ENCODE measurements at regions of chr2 and their contacts with region 1.

Region 1: GRCh38 chr2:231810905-231811304 is 24.7 kb downstream of the COPS7B start:
- DNase-seq: peak; percentile 89
- ATAC-seq: peak; percentile 94
- H3K4me3 ChIP-seq: no peak overlapping the region
- H3K27ac ChIP-seq: no peak overlapping the region
- H3K4me1 ChIP-seq: peaks cover 3% of the 10 kb centered on the region; the same call in 1 of the 2 replicates
- H3K27me3 ChIP-seq: no peaks in the 10 kb centered on the region
- CTCF ChIP-seq: no peak
- POLR2A ChIP-seq: no peak
- RAD21 ChIP-seq: no peak

Region 2: DNA sequence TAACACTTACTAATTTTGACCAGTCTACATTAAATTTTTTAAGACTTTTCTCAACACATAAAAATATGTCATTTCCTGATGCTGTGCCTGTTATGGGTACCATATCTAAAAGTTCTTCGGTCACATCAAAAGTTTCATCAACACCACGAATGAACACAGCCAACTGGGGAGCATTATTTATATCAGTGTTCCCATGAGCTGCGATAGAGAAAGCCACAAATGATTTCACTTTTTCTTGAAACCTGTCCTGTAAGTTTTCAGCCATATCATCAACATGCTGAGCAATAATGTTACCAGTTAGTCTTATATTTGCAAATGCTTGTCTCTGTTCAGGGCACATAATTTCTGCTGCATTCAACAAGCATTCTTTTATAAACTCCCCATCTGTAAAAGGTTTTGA is 316.2 kb before region 1 on chr2:
- CTCF ChIA-PET with region 1: no interaction called
- POLR2A ChIA-PET with region 1: no interaction called
- dilution Hi-C with region 1: no loop called
- in situ Hi-C with region 1: no loop called
- intact Hi-C with region 1: no loop called
- DNase-seq: no peak
- ATAC-seq: no peak
- H3K4me3 ChIP-seq: no peak overlapping the region
- H3K27ac ChIP-seq: no peak overlapping the region
- H3K4me1 ChIP-seq: no peaks in the 10 kb centered on the region
- H3K27me3 ChIP-seq: no peaks in the 10 kb centered on the region
- CTCF ChIP-seq: no peak
- POLR2A ChIP-seq: no peak
- RAD21 ChIP-seq: no peak

Region 3: DNA sequence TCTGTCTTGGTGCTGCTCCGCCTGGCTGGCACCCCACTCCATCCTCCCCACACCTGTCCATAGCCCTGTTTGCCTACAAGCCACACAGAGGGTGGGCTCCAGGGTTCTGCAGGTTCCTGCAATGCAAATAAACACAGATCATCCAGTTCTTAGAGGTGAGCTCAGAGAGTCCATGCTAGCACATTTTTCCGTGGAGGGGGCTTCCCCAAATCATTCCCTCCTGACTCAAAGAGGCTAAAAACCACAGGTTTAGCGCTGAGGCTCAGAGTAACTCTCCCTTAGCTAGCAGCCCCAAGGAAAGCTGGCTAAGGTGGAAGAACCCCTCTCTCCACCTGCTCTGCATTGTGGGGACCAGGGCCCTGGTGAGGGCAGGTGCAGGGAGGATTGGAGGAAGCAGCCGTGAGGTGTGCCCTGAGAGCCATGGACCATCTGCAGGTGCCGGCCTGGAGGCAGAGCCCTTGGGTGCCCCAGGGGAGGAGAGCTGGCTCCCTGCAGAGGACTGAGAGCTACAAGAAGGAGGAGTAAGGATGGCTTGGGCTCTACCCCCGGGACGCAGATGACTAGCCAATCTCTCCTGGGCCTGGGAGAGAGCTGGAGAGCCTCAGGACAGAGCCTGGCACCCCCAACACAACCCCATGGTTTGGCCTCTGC is 242.0 kb before region 1 on chr2:
- CTCF ChIA-PET with region 1: no interaction called
- POLR2A ChIA-PET with region 1: no interaction called
- dilution Hi-C with region 1: no loop called
- in situ Hi-C with region 1: no loop called
- intact Hi-C with region 1: no loop called
- DNase-seq: no peak
- ATAC-seq: no peak
- H3K4me3 ChIP-seq: no peak overlapping the region
- H3K27ac ChIP-seq: no peak overlapping the region
- H3K4me1 ChIP-seq: no peaks in the 10 kb centered on the region
- H3K27me3 ChIP-seq: peaks cover 13% of the 10 kb centered on the region
- CTCF ChIP-seq: no peak
- POLR2A ChIP-seq: no peak
- RAD21 ChIP-seq: no peak

Region 4: GRCh38 chr2:231861532-231861931 is 50.6 kb after region 1 on chr2:
- CTCF ChIA-PET with region 1: no interaction called
- POLR2A ChIA-PET with region 1: no interaction called
- dilution Hi-C with region 1: no loop called
- in situ Hi-C with region 1: loop called (anchors 10 kb)
- intact Hi-C with region 1: no loop called
- DNase-seq: no peak
- ATAC-seq: no peak; the same call in 1 of the 2 replicates
- H3K4me3 ChIP-seq: no peak overlapping the region
- H3K27ac ChIP-seq: no peak overlapping the region
- H3K4me1 ChIP-seq: no peaks in the 10 kb centered on the region
- H3K27me3 ChIP-seq: peaks cover 8% of the 10 kb centered on the region
- CTCF ChIP-seq: no peak
- POLR2A ChIP-seq: no peak
- RAD21 ChIP-seq: no peak

Region 5: GRCh38 chr2:232239951-232240681 is 429.2 kb after region 1 on chr2:
- CTCF ChIA-PET with region 1: no interaction called
- POLR2A ChIA-PET with region 1: no interaction called
- dilution Hi-C with region 1: no loop called
- in situ Hi-C with region 1: no loop called
- intact Hi-C with region 1: no loop called
- DNase-seq: peak; percentile 27
- ATAC-seq: no peak
- H3K4me3 ChIP-seq: no peak overlapping the region
- H3K27ac ChIP-seq: no peak overlapping the region
- H3K4me1 ChIP-seq: peaks cover 3% of the 10 kb centered on the region
- H3K27me3 ChIP-seq: no peaks in the 10 kb centered on the region
- CTCF ChIP-seq: no peak
- POLR2A ChIP-seq: no peak
- RAD21 ChIP-seq: no peak